ENCODE measurements at regions of chr10 and their contacts with region 1.

Region 1: DNA sequence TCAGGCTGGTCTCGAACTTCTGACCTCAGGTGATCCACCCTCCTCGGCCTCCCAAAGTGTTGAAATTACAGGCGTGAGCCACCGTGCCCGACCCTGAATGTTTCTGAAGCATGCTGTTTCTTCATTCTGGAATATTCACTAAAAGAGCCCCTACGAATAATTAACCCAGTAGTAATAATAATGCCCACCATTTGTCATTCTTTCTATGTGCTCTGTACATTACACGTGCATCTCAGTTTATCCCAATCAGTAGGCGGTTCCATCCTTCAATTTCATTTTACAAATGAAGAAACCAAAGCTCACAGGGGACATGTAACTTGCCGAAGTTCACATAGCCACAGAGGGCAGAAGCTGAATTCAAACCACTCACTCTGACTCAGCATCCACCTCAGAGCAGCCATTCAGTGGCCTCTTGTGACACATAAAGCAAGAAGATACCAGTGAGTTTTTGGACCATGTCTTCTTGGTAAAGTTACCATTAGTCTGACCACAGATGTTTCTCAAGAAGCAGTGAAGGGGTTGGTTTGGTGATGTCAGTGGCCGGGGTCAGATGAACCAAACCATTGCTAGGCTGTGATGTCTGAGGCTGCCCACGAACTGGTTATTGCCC is 71.9 kb upstream of the DUSP5 start:
- DNase-seq: peak; percentile 89
- ATAC-seq: peak; percentile 86
- H3K4me3 ChIP-seq: no peak overlapping the region
- H3K27ac ChIP-seq: peak overlapping the region; percentile 60
- H3K4me1 ChIP-seq: peaks cover 65% of the 10 kb centered on the region
- H3K27me3 ChIP-seq: no peaks in the 10 kb centered on the region
- CTCF ChIP-seq: no peak
- EP300 ChIP-seq: peak; percentile 56 to 63; a peak in 1 of 4 replicates
- POLR2A ChIP-seq: no peak
- RAD21 ChIP-seq: peak; percentile 34; the same call in 1 of the 2 replicates

Region 2: GRCh38 chr10:110192552-110192951 is 233.2 kb before region 1 on chr10:
- CTCF ChIA-PET with region 1: no interaction called
- POLR2A ChIA-PET with region 1: no interaction called
- RAD21 ChIA-PET with region 1: no interaction called
- SMC1A ChIA-PET with region 1: no interaction called
- in situ Hi-C with region 1: no loop called
- intact Hi-C with region 1: no loop called
- DNase-seq: no peak
- ATAC-seq: peak; percentile 56
- H3K4me3 ChIP-seq: no peak overlapping the region
- H3K27ac ChIP-seq: no peak overlapping the region
- H3K4me1 ChIP-seq: no peaks in the 10 kb centered on the region
- H3K27me3 ChIP-seq: peaks cover 0 to 2% of the 10 kb centered on the region in 2 experiments; a peak in 1 of 4 replicates
- CTCF ChIP-seq: peak in 2 of 3 experiments; percentile 3 to 11; a peak in 1 of 6 replicates
- EP300 ChIP-seq: no peak
- POLR2A ChIP-seq: no peak
- RAD21 ChIP-seq: no peak

Region 3: GRCh38 chr10:110387983-110388687 is 37.7 kb before region 1 on chr10:
- CTCF ChIA-PET with region 1: no interaction called
- POLR2A ChIA-PET with region 1: no interaction called
- RAD21 ChIA-PET with region 1: no interaction called
- SMC1A ChIA-PET with region 1: interaction called, 3 read pairs
- in situ Hi-C with region 1: no loop called
- intact Hi-C with region 1: loop called (anchors 1 kb)
- DNase-seq: peak; percentile 83
- ATAC-seq: peak; percentile 87
- H3K4me3 ChIP-seq: no peak overlapping the region
- H3K27ac ChIP-seq: peak overlapping the region; percentile 75
- H3K4me1 ChIP-seq: peaks cover 26% of the 10 kb centered on the region
- H3K27me3 ChIP-seq: no peaks in the 10 kb centered on the region
- CTCF ChIP-seq: no peak
- EP300 ChIP-seq: peak in 1 of 2 experiments; percentile 96; a peak in 3 of 4 replicates
- POLR2A ChIP-seq: no peak
- RAD21 ChIP-seq: peak; percentile 22; the same call in 1 of the 2 replicates

Region 4: DNA sequence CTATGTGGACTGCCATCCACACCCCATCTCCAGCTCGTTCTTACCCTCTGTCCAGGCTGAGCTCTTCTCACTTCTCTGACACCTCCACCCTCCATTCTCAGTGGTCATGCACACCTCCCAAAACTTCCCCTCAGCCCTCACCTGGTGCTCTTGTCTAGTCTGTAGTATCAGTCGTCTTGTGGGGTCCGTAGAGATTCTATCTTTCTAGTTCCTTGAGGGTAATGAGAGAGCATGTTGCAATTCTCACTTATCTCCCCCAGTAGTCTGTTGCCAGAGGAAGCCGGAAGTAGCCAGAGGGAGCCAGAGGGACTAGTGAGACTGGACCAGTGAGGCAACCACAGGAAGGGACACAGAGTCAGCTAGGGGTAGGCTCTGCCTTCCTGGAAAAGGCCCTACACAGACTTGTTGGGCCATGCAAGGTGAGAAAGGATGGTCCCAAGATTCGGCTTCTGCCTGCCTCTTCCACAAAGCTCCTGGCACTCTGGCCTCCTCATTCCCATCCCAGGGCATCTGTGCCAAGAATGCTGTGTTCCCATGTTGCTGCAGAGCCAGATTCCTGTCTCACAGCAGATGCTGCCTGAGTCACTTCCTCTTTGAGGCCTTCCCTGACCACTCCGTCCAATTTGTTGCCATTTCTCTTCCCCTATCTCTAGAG is 21.3 kb after region 1 on chr10:
- CTCF ChIA-PET with region 1: interaction called, 3 read pairs
- POLR2A ChIA-PET with region 1: interaction called, 4 read pairs
- RAD21 ChIA-PET with region 1: interaction called, 13 read pairs
- SMC1A ChIA-PET with region 1: interaction called, 8 read pairs
- in situ Hi-C with region 1: no loop called
- intact Hi-C with region 1: no loop called
- DNase-seq: no peak
- ATAC-seq: no peak; the same call in 2 of the 3 replicates
- H3K4me3 ChIP-seq: no peak overlapping the region
- H3K27ac ChIP-seq: no peak overlapping the region
- H3K4me1 ChIP-seq: peaks cover 6% of the 10 kb centered on the region
- H3K27me3 ChIP-seq: no peaks in the 10 kb centered on the region; a peak in 1 of 4 replicates
- CTCF ChIP-seq: no peak
- EP300 ChIP-seq: no peak
- POLR2A ChIP-seq: no peak
- RAD21 ChIP-seq: no peak

Region 5: DNA sequence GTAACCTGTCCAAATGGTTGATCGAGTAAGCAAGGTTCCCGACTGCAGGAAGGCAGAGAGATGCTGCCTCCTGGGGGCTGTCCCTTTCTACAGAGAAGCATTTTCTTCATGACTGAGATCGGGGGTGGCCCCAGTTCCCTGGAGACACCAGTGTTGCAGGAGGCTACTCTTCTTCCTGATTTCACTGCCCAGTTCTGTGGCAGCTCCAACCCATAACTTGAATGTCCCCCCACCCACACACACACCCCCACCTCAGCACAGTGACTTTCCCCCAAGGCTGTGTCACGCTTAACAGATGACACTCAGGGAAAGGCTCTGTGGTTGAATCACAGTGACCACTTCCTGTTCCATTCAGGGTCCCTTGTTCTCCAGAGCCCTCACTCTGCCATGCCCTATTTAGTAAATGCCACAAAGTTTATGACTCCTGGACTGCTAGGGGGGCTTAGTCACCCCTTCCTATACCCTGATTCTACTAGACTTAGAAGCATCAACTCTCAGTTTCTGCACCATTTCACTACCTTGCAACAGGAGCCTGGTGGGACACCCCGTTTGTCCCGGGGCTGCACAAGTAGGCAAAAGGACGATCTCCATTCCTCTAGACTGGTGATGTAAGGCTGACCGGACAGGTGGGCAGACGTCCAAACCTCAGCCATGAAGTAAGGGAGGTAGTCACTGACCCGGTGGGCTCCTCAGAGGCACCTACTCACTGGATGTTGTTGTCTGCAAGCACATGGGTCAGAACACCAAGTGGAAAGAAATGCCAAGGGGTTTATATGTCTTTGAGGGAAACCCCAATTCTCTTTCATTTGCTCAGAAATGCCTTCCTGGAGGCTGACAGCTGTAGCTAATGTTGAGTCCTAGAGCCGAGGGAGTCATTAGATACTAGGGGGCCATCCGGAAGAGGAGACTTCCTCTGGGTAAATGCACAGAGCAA is 110.4 kb after region 1 on chr10:
- CTCF ChIA-PET with region 1: no interaction called
- POLR2A ChIA-PET with region 1: no interaction called
- RAD21 ChIA-PET with region 1: no interaction called
- SMC1A ChIA-PET with region 1: no interaction called
- in situ Hi-C with region 1: no loop called
- intact Hi-C with region 1: loop called (anchors 5 kb)
- DNase-seq: peak; percentile 87
- ATAC-seq: peak; percentile 91
- H3K4me3 ChIP-seq: no peak overlapping the region; the same call in 1 of the 2 replicates
- H3K27ac ChIP-seq: peak overlapping the region; percentile 67
- H3K4me1 ChIP-seq: peaks cover 29% of the 10 kb centered on the region
- H3K27me3 ChIP-seq: no peaks in the 10 kb centered on the region
- CTCF ChIP-seq: peak; percentile 28 to 48 (median 37); a peak in 4 of 6 replicates
- EP300 ChIP-seq: peak; percentile 84 to 85; a peak in 3 of 4 replicates
- POLR2A ChIP-seq: no peak
- RAD21 ChIP-seq: peak; percentile 68

Region 6: DNA sequence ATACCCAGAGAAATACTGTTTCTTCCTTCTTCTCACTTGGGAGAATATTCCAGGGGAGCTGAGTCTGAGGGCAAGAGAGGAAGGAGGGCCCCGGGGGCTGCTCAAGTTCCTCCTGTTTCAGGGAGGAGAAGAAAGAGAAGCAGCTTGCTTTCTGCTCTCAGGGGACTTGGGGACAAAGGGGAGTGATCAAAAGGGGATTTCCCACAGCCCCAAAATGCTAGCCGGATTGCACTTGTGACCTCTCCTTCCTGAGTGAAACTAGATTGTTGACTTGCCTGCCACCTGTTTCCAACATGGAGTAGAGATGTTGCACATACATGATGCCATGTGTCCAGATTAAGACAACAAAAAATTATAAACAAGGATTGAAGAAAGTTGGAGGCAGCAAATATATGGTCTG is 417.2 kb after region 1 on chr10:
- CTCF ChIA-PET with region 1: no interaction called
- POLR2A ChIA-PET with region 1: no interaction called
- RAD21 ChIA-PET with region 1: no interaction called
- SMC1A ChIA-PET with region 1: no interaction called
- in situ Hi-C with region 1: no loop called
- intact Hi-C with region 1: no loop called
- DNase-seq: peak; percentile 98
- ATAC-seq: peak; percentile 74
- H3K4me3 ChIP-seq: peak overlapping the region; percentile 68
- H3K27ac ChIP-seq: peak overlapping the region; percentile 97
- H3K4me1 ChIP-seq: peaks cover 53% of the 10 kb centered on the region
- H3K27me3 ChIP-seq: no peaks in the 10 kb centered on the region
- CTCF ChIP-seq: no peak
- EP300 ChIP-seq: peak; percentile 53 to 91; a peak in 3 of 4 replicates
- POLR2A ChIP-seq: no peak; the same call in 1 of the 2 replicates
- RAD21 ChIP-seq: peak; percentile 37; the same call in 1 of the 2 replicates

Measured in GM12878 (cell line).